B cell (primary cell): ENCODE measurements at regions of chr13 and their contacts with region 1.

Region 1: DNA sequence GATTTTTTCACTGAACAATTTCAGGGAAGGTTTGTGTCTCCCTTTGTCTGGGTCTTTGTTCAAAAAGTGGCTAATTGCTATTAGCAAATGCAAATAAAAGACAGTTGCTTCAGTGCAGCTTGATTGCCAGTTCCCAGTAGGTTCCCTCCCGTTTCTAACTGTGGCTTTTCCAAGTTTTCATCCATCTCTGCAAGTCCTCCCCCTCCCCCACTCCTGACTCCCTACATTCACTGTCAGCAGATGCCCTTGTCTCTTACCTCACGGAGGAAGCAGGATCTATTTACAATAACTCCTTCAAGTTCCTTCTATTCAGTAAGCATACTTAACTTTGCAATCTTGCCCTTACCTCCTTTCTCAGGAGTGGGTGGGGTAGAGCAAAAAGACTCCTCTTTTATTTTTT is 55.4 kb upstream of the SCEL start:
- DNase-seq: no peak
- ATAC-seq: no peak
- H3K4me3 ChIP-seq: no peak overlapping the region
- H3K4me3 Mint-ChIP-seq: no peak overlapping the region
- H3K27ac ChIP-seq: no peak overlapping the region
- H3K27ac Mint-ChIP-seq: no peak overlapping the region
- H3K4me1 ChIP-seq: peaks cover 5 to 6% of the 10 kb centered on the region in 2 donors
- H3K4me1 Mint-ChIP-seq: peaks cover 13% of the 10 kb centered on the region
- H3K27me3 ChIP-seq: no peaks in the 10 kb centered on the region
- H3K27me3 Mint-ChIP-seq: no peaks in the 10 kb centered on the region
- CTCF ChIP-seq: no peak

Region 2: GRCh38 chr13:77022341-77022740 is 457.7 kb before region 1 on chr13:
- CTCF ChIA-PET with region 1: no interaction called
- POLR2A ChIA-PET with region 1: no interaction called
- intact Hi-C with region 1: no loop called
- DNase-seq: no peak
- ATAC-seq: no peak
- H3K4me3 ChIP-seq: no peak overlapping the region
- H3K4me3 Mint-ChIP-seq: no peak overlapping the region
- H3K27ac ChIP-seq: peak overlapping the region in 1 of 2 donors; percentile 63
- H3K27ac Mint-ChIP-seq: no peak overlapping the region
- H3K4me1 ChIP-seq: peaks cover 31 to 56% of the 10 kb centered on the region in 2 donors
- H3K4me1 Mint-ChIP-seq: peaks cover 61% of the 10 kb centered on the region
- H3K27me3 ChIP-seq: no peaks in the 10 kb centered on the region
- H3K27me3 Mint-ChIP-seq: no peaks in the 10 kb centered on the region
- CTCF ChIP-seq: no peak

Region 3: DNA sequence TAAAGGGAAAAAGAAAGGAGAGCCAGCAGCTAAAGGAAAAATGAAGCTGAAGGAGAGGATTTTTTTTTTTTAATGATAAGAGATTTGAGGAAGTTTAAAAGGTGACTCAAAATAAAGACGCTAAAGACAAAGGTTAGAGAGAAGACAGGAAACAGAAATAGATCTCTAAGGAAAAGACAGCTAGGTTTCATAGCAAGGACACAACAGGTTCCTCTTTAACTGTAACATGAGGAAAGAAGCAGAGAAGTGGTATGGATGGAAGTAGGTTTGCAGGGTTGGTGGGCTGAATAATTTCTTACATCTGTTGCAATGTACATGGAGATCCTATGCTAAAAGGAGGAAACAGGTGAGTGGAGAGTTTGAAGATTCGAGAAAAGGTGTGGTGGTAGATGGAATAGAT is 260.7 kb before region 1 on chr13:
- CTCF ChIA-PET with region 1: interaction called, 16 read pairs
- POLR2A ChIA-PET with region 1: interaction called, 4 read pairs
- intact Hi-C with region 1: no loop called
- DNase-seq: no peak
- ATAC-seq: no peak
- H3K4me3 ChIP-seq: no peak overlapping the region
- H3K4me3 Mint-ChIP-seq: no peak overlapping the region
- H3K27ac ChIP-seq: peak overlapping the region in 1 of 2 donors; percentile 60
- H3K27ac Mint-ChIP-seq: no peak overlapping the region
- H3K4me1 ChIP-seq: peaks cover 6 to 13% of the 10 kb centered on the region in 2 donors
- H3K4me1 Mint-ChIP-seq: peaks cover 3% of the 10 kb centered on the region
- H3K27me3 ChIP-seq: no peaks in the 10 kb centered on the region
- H3K27me3 Mint-ChIP-seq: no peaks in the 10 kb centered on the region
- CTCF ChIP-seq: no peak

Region 4: GRCh38 chr13:77274126-77274525 is 205.9 kb before region 1 on chr13:
- CTCF ChIA-PET with region 1: interaction called, 115 read pairs
- POLR2A ChIA-PET with region 1: no interaction called
- intact Hi-C with region 1: loop called (anchors 1 kb)
- DNase-seq: no peak
- ATAC-seq: no peak
- H3K4me3 ChIP-seq: no peak overlapping the region
- H3K4me3 Mint-ChIP-seq: no peak overlapping the region
- H3K27ac ChIP-seq: peak overlapping the region in 1 of 2 donors; percentile 53
- H3K27ac Mint-ChIP-seq: no peak overlapping the region
- H3K4me1 ChIP-seq: no peaks in the 10 kb centered on the region
- H3K4me1 Mint-ChIP-seq: peaks cover 6% of the 10 kb centered on the region
- H3K27me3 ChIP-seq: no peaks in the 10 kb centered on the region
- H3K27me3 Mint-ChIP-seq: no peaks in the 10 kb centered on the region
- CTCF ChIP-seq: peak; percentile 40

Region 5: DNA sequence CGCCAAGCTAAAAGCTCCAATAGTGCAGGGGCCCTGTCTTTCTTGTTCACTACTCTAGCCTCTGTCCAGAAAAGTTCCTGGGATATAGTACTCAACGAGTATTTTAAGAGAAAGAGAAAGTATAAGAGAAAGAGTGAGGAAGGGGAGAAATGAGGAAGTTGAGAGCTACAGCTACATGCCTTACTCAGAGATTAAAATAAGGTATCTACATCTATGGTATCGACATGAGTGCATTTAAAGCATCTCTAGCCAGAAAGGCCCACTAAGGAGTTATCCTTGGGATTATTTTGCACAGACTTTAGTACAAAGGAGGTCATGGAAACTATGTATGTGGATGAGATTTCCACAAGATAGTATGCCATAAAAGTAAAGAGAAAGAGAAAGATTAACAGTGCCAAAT is 181.6 kb before region 1 on chr13:
- CTCF ChIA-PET with region 1: interaction called, 38 read pairs
- POLR2A ChIA-PET with region 1: no interaction called
- intact Hi-C with region 1: no loop called
- DNase-seq: peak; percentile 69
- ATAC-seq: peak; percentile 80
- H3K4me3 ChIP-seq: peak overlapping the region; percentile 35 to 61 (median 43)
- H3K4me3 Mint-ChIP-seq: peak overlapping the region; percentile 83
- H3K27ac ChIP-seq: peak overlapping the region; percentile 66 to 71
- H3K27ac Mint-ChIP-seq: peak overlapping the region; percentile 85
- H3K4me1 ChIP-seq: peaks cover 40 to 60% of the 10 kb centered on the region in 2 donors
- H3K4me1 Mint-ChIP-seq: peaks cover 64% of the 10 kb centered on the region
- H3K27me3 ChIP-seq: no peaks in the 10 kb centered on the region
- H3K27me3 Mint-ChIP-seq: no peaks in the 10 kb centered on the region
- CTCF ChIP-seq: no peak

Region 6: DNA sequence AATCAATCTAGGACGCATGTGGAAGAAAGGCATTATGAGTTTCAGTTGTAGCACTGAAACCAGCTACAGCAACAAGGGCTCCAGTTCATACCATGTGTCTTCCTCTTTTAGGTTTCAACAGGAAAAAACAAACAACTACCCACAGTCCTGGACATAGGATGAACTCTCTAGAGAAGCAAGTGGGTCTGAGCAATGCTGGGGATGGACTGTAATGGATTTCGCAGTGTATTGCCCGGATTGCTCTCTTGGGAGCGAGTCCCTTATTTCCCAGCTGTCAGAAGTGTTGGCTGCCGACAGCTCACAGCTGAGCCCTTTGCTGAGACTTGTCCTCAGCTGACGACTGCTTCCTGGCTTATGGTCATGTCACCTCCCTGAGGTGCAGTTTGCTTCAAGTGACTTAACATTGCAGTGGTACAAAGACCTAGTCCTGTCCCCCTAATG is 141.1 kb before region 1 on chr13:
- CTCF ChIA-PET with region 1: interaction called, 10 read pairs
- POLR2A ChIA-PET with region 1: interaction called, 4 read pairs
- intact Hi-C with region 1: no loop called
- DNase-seq: peak; percentile 79
- ATAC-seq: peak; percentile 77
- H3K4me3 ChIP-seq: peak overlapping the region; percentile 32 to 50 (median 45)
- H3K4me3 Mint-ChIP-seq: peak overlapping the region; percentile 72
- H3K27ac ChIP-seq: peak overlapping the region; percentile 91 to 92
- H3K27ac Mint-ChIP-seq: peak overlapping the region; percentile 86
- H3K4me1 ChIP-seq: peaks cover 61 to 65% of the 10 kb centered on the region in 2 donors
- H3K4me1 Mint-ChIP-seq: peaks cover 76% of the 10 kb centered on the region
- H3K27me3 ChIP-seq: no peaks in the 10 kb centered on the region
- H3K27me3 Mint-ChIP-seq: no peaks in the 10 kb centered on the region
- CTCF ChIP-seq: no peak

Region 7: GRCh38 chr13:77492982-77493381 is 12.9 kb after region 1 on chr13:
- CTCF ChIA-PET with region 1: interaction called, 13 read pairs
- POLR2A ChIA-PET with region 1: no interaction called
- intact Hi-C with region 1: no loop called
- DNase-seq: peak; percentile 44
- ATAC-seq: peak; percentile 72
- H3K4me3 ChIP-seq: no peak overlapping the region
- H3K4me3 Mint-ChIP-seq: no peak overlapping the region
- H3K27ac ChIP-seq: no peak overlapping the region
- H3K27ac Mint-ChIP-seq: no peak overlapping the region
- H3K4me1 ChIP-seq: no peaks in the 10 kb centered on the region
- H3K4me1 Mint-ChIP-seq: no peaks in the 10 kb centered on the region
- H3K27me3 ChIP-seq: no peaks in the 10 kb centered on the region
- H3K27me3 Mint-ChIP-seq: peaks cover 7% of the 10 kb centered on the region
- CTCF ChIP-seq: peak; percentile 61

Region 8: DNA sequence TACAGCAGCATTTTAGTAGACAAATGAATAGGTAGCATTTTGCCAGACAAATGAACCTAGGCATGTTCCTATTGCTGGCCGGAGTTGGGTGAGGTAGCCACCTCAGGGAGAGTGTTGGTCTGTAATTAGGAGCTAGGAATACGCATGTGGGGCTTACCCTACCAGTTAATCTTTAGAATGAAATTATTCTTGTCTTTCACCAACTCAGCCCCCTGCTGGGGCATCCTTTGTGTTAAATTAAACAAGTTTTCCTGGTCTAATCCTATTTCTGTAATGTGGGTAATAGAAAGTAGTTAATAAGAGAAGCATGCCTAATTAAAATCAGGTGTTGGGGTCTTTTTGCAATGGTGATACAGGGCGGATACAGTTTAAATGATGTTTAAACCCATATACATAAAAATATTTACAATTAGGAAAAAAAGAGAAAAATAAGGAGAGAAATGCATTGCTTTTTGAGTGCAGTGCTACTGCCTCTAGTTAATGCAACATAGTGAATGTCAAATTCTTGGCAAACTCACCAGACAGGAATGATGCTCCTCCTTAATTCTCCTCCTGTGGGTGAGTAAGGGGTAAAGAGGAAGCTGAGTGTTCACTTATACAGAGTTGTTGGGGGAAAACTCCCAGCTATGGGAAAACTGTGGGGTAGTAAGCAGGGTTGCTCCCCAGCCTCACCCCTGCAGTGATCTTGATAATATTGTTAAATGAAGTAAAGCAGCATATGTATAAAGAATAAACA is 715.0 kb after region 1 on chr13:
- CTCF ChIA-PET with region 1: no interaction called
- POLR2A ChIA-PET with region 1: no interaction called
- intact Hi-C with region 1: no loop called
- DNase-seq: no peak
- ATAC-seq: no peak
- H3K4me3 ChIP-seq: no peak overlapping the region
- H3K4me3 Mint-ChIP-seq: no peak overlapping the region
- H3K27ac ChIP-seq: no peak overlapping the region
- H3K27ac Mint-ChIP-seq: no peak overlapping the region
- H3K4me1 ChIP-seq: no peaks in the 10 kb centered on the region
- H3K4me1 Mint-ChIP-seq: no peaks in the 10 kb centered on the region
- H3K27me3 ChIP-seq: no peaks in the 10 kb centered on the region
- H3K27me3 Mint-ChIP-seq: no peaks in the 10 kb centered on the region
- CTCF ChIP-seq: no peak